IMR-90 (cell line): ENCODE measurements at regions of chr14 and their contacts with region 1.

Region 1: GRCh38 chr14:68598621-68599447 is 194.0 kb downstream of the ZFP36L1 start:
- DNase-seq: peak; percentile 97
- ATAC-seq: peak; percentile 87
- H3K4me3 ChIP-seq: peak overlapping the region; percentile 3; the same call in 1 of the 2 replicates
- H3K27ac ChIP-seq: peak overlapping the region; percentile 97
- H3K4me1 ChIP-seq: peaks cover 25% of the 10 kb centered on the region
- H3K27me3 ChIP-seq: no peaks in the 10 kb centered on the region
- CTCF ChIP-seq: no peak
- POLR2A ChIP-seq: no peak
- RAD21 ChIP-seq: peak; percentile 29

Region 2: DNA sequence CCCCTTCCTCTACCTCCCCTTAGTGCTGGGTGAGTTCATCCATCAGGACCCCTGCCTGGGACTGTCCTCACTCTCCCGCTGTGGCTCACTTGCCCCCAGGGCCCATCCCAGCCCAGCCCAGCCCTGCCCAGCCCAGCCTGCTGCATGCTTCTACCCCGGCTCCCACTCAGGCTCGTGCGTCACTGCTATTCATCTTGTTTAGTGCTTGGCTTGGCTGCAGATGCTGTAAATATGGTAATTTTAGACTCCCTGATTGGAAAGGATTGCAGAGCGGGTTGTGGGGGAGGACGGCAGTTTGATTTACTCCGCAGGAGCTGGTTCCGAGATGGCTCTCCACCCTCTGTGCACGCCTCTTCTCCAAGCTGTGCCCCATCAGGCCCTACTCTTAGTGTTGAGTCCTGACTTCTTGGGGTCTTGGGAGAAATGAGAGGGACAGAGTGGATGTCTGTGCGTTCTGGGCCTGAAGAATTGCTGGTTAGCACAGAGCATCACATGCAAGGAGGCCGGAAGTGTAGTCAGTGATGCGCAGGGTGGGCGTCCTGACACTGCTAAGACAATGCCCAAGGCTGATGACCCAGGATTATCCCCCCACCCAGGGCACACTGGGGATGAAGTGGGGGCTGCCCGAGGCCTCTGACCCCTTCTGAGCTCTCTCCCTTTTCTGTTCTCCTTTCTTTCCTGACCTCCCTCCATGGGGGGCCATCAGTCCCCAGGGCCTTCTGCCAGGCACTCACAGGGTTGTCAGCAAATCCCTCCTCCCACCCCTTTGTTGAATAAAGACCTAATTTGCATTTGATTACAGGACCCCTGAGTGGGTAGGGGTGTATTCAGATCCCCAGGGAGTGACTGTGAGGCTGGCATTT is 50.4 kb before region 1 on chr14:
- CTCF ChIA-PET with region 1: no interaction called
- POLR2A ChIA-PET with region 1: no interaction called
- dilution Hi-C with region 1: no loop called
- in situ Hi-C with region 1: no loop called
- intact Hi-C with region 1: loop called (anchors 2 kb)
- DNase-seq: peak; percentile 98
- ATAC-seq: peak; percentile 79
- H3K4me3 ChIP-seq: no peak overlapping the region
- H3K27ac ChIP-seq: peak overlapping the region; percentile 95
- H3K4me1 ChIP-seq: peaks cover 45% of the 10 kb centered on the region
- H3K27me3 ChIP-seq: no peaks in the 10 kb centered on the region
- CTCF ChIP-seq: no peak
- POLR2A ChIP-seq: 0 out of 2 replicates have a peak, but pooled peaks have one; percentile 30
- RAD21 ChIP-seq: peak; percentile 31